MCF 10A (cell line): ENCODE measurements at regions of chr17 and their contacts with region 1.

Region 1: GRCh38 chr17:75250009-75250471 is 11.4 kb downstream of the GGA3 start:
- DNase-seq: peak; percentile 81
- H3K4me3 Mint-ChIP-seq: no peak overlapping the region
- H3K27ac Mint-ChIP-seq: peak overlapping the region; percentile 93
- H3K4me1 Mint-ChIP-seq: peaks cover 22% of the 10 kb centered on the region
- H3K27me3 Mint-ChIP-seq: no peaks in the 10 kb centered on the region
- CTCF ChIP-seq: no peak

Region 2: DNA sequence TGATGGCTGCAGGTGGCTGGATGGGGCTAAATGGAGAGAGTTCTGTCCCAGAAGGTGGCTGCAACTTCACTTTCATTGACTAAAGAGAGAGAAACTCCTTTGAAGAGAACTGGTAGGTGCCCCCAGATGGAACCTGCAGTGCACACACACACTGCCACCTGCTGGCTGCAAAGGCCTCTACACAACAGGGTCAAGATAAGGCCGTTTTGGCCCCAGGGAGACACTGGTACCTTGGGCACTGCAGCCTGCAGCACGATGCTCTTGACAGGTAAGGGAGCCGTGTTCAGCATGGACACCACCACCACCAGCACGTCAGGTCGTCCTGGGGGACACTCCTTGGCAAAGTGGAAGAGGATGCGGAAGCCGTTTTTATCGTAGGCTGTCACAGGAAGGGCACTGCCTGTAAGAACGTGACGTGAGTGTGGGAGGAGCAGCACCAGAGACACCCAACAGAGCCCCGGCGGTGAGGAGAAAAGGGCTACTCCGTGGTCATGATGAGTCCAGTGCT is 11.3 kb before region 1 on chr17:
- CTCF ChIA-PET with region 1: interaction called, 11 read pairs
- POLR2A ChIA-PET with region 1: interaction called, 7 read pairs
- intact Hi-C with region 1: no loop called
- DNase-seq: peak; percentile 70
- H3K4me3 Mint-ChIP-seq: no peak overlapping the region
- H3K27ac Mint-ChIP-seq: peak overlapping the region; percentile 24
- H3K4me1 Mint-ChIP-seq: peaks cover 5% of the 10 kb centered on the region
- H3K27me3 Mint-ChIP-seq: no peaks in the 10 kb centered on the region
- CTCF ChIP-seq: peak; percentile 85

Region 3: GRCh38 chr17:75261336-75262111 is 11.5 kb after region 1 on chr17 and contains the starts of genes GGA3 and MRPS7:
- CTCF ChIA-PET with region 1: interaction called, 3 read pairs
- POLR2A ChIA-PET with region 1: interaction called, 24 read pairs
- intact Hi-C with region 1: no loop called
- DNase-seq: peak; percentile 94
- H3K4me3 Mint-ChIP-seq: peak within 1 kb of the TSS; percentile 100
- H3K27ac Mint-ChIP-seq: peak within 1 kb of the TSS; percentile 100
- H3K4me1 Mint-ChIP-seq: peaks cover 46% of the 10 kb centered on the region
- H3K27me3 Mint-ChIP-seq: no peaks in the 10 kb centered on the region
- CTCF ChIP-seq: no peak
- total RNA-seq, gene GGA3: 32.7 and 39.5 TPM in 2 replicates
- total RNA-seq, gene MRPS7: 73.9 and 75.0 TPM in 2 replicates